ENCODE measurements at regions of chr1 and their contacts with region 1.

Region 1: DNA sequence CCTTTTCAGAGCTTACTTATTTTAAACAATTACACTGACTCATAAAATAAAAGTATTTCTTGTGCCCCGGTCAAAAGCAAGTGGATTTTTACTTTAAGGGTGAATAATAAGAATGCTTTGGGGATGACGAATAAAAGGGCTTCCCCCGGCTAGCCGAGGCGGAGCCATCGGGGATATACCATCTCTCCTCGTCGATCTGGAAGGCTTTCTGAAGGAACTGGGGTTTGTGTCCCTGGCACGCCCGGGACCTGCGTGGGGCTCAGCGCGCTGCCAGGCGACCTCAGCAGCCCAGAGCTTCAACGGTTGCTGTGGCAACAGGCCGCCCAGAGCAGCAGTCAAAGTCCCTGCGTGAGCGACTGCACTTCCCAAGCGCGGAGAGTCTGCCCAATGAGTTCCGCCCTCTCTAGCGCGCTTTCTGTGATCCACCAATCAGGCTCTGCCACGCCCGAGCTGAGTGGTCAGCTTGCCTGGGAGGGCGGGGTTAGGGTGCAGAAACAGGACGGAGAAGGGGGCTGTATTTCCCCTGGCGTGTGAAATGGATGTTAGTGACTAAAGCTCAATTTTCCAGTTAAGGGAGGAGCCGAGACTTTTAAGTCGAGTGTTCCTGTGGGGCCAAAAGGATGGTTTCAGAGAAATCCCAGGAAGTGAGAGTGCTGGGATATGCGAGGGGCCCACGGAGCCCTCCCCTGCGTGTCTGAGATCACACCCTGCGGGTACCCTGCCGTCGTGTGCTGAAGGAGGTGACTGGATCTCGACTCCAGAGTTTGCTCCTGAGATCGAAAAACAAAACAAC is 33.0 kb upstream of the MGST3 start:
- DNase-seq: peak; percentile 97

Region 2: DNA sequence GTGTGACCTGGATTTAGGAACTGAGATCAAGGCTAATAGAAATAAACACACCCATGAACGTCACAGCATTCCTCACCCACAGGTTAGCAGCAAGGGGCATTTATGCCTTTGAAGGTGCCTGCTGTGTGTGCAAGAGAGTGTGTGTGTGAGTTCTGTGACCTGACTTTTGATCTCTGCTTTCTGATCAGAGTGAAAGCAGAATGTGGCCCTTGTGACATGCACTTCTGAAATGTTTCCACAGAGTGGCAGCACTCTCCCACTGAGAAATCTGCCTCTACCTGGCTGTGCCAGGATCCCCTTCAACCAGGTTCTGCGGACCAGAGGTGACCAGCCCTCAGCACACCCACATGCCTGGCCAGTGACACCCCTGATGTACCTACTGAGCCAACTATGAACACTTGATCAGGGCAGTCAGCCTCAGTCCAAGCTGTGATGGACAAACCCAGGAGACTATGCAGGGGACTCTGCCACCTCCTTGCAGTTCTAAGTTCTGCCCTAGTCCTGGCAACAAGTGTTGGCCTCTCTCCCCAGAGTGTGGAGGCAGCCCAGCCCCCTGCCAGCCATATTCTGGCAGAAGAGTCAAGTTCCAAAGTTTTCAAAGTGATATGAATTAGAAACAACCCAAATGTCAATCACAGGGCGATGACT is 194.1 kb before region 1 on chr1:
- in situ Hi-C with region 1: loop called (anchors 25 kb)
- DNase-seq: peak; percentile 35

Region 3: DNA sequence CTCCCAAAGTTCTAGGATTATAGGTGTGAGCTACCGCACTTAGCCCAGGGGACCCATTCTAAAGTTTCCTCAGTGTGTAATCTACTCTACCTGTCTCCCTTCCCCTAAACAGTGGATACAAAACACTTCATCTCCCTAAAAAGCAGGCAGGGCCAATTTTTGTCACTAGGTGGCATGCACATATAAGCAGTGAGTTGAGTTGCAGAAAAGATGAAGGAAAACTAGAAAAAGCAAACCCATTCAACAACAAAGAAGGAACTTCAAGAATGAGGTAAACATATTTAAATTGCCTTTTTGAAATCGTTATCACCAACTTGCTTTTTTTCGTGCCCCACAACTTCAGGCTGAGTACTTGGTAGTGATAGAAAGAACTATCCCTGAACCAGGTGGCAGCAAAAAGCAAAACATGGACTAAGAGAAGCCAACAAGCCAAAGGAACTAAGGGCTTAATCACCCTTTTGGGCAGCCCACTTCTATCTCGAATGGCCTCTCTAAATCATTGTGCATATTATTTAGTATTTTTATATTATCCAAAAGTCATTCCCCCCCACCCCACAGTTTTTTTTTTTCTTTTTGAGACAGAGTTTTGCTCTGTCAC is 119.9 kb after region 1 on chr1:
- in situ Hi-C with region 1: no loop called
- DNase-seq: peak; percentile 75

Region 4: DNA sequence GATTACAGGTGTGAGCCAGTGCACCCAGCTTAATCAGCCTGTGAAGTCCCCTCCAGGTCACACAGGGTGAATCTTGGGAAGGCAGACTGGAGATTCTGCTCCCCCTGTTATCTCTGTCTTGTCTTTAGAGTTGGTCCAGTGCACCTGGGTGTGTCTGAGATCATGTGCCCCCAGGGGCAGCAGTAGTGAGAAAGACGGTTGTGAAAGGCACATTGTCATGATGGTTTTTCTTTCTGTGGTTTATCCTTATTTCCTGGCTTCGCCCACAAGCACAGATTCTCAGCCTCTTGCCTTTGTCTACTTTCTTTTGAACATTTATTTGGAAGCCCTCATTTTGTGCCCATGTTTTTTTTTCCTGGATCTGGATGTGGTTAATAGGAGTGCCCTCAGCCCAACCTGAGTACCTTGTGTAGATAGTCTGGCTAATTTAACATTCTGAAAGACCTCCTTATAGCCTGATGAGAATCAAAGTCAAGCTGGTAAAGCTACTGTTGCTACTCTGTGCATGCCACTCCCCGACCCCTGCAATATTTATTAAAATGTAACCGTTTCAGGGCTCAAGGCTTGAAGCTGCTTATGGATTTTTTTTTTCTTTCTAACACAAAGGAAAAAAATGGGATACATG is 253.1 kb after region 1 on chr1:
- in situ Hi-C with region 1: no loop called
- DNase-seq: no peak

Measured in ACHN (cell line).